ENCODE measurements at regions of chr13 and their contacts with region 1.

Region 1: DNA sequence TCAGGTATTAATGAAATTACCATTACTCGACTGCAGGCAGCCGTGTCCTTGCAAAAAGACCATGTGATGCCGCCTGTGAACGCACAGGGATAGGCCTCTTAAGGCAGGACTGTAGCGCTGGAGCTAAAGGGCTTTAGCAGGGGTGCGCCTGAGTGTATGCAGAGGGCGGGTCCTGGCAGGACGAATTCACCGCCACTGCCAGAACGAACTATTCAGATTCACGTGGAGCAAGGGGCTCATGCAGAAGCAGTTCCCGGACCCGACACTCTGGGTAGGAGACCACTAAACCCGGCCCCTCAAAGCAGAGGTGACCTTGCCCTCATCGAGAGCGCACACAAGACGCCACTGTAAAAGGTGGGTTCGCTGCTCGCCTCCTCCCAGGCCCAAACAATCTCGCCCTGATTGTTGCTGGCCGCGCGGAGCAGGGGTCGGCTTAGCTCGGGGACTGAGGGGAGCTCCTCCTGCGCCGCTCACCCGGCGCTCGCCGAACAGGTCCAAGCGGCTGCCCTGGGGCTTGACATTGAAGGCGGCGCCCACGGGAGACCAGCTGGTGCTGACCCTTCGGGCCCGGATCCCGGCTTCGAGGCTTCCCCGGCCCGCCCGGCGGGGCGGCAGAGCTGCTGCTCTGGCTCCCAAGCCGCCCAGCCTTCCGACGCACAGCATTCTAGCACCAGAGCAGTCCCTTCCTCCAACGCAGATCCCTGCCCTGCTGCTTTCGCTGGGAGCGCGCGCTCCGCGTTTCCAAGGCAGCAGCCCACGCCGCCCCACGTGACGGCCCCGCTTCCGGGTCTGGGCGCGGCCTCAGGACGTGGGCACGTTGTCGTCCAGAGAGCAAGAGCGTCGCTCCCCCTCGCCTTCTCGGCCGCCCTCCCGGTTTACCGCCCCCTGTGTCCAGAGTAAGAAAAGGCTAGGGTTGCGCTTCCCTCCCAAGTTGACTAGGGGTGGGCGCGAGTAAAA is at the start of gene MIPEP:
- DNase-seq: peak; percentile 95
- H3K4me3 ChIP-seq: peak within 1 kb of the TSS; percentile 71 to 95 (median 88)
- H3K27ac ChIP-seq: peak within 1 kb of the TSS; percentile 91 to 93 (median 92)
- H3K4me1 ChIP-seq: peaks cover 0 to 15% (median 13%) of the 10 kb centered on the region in 4 donors
- H3K27me3 ChIP-seq: no peaks in the 10 kb centered on the region
- CTCF ChIP-seq: peak in 3 of 4 experiments; percentile 57 to 70 (median 62)
- EP300 ChIP-seq: no peak
- POLR2A ChIP-seq: peak; percentile 60 to 68
- total RNA-seq, gene MIPEP: 10.7 to 11.4 (median 11.1) TPM

Region 2: DNA sequence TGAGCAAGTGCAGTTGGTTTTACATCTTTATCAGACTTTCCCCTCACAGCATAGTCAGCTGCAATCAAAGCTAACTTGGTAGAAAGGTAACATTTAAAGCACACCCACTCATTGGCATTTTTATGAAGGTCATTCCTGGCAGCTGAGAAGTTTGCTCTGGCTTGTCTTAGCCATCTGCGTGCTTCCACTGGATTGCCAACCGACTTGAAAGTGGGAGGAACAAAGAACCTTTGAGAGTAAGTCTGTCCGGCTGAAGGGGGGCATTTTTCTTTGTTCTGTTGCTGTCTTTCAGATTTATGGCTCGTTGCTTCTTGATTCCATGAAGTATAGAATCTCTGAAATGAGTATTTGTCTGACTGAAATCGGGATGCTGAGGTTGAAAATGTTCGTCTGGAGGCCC is 558.6 kb before region 1 on chr13:
- intact Hi-C with region 1: no loop called
- DNase-seq: no peak
- H3K4me3 ChIP-seq: no peak overlapping the region
- H3K27ac ChIP-seq: no peak overlapping the region
- H3K4me1 ChIP-seq: no peaks in the 10 kb centered on the region
- H3K27me3 ChIP-seq: no peaks in the 10 kb centered on the region
- CTCF ChIP-seq: no peak
- EP300 ChIP-seq: no peak
- POLR2A ChIP-seq: no peak

Region 3: DNA sequence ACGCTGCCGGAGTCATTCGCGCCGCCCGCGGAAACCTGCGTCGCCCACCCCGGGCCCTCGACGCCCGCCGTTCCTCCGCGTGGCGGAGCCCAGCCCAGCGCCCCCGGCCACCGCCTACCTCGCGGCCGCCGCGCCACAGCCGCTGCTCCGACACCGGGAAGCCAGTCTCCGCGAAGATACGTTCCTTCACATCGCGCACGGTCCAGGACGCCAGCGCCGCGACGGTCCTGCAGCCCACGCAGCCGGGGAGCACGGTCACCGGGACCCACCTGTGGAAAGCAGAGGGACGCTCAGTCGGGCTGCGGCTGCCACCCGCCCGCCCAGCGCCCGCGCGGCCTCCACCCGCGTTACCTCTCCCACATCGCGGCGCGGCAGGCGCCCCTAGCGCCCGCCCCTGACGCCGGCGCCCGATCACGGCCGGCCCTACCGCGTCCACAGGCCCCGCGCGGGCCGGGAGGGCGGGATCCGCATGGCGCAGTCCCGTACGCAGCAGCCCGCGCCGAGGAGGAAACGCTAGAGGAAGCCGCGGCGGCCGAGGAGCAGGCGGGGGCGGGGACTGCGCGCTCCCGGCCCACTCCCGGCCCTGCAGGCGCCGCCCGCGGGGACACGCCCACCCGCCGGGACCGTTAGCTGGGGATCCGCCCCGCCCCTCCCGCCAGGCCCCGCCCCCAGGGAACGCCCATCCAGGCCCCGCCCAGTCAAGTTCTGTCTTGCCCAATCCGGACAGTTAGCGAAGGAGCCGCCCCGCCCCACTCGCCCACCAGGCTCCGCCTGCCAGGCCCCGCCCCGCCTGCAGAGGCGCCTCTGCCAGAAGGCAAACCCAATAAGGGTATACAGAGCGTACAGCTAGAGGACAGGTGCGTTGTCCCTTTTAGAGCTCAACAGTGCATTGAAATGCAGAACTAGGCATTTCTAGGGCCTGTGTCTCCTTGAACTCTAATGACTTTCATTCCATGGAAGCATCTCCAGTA is 513.6 kb before region 1 on chr13:
- intact Hi-C with region 1: loop called (anchors 5 kb)
- DNase-seq: peak; percentile 98
- H3K4me3 ChIP-seq: peak overlapping the region; percentile 67 to 91 (median 78)
- H3K27ac ChIP-seq: peak overlapping the region; percentile 86 to 95 (median 90)
- H3K4me1 ChIP-seq: peaks cover 0 to 53% (median 35%) of the 10 kb centered on the region in 4 donors
- H3K27me3 ChIP-seq: no peaks in the 10 kb centered on the region
- CTCF ChIP-seq: peak in 1 of 4 experiments; percentile 19
- EP300 ChIP-seq: no peak
- POLR2A ChIP-seq: peak in 1 of 2 donors; percentile 23

Region 4: DNA sequence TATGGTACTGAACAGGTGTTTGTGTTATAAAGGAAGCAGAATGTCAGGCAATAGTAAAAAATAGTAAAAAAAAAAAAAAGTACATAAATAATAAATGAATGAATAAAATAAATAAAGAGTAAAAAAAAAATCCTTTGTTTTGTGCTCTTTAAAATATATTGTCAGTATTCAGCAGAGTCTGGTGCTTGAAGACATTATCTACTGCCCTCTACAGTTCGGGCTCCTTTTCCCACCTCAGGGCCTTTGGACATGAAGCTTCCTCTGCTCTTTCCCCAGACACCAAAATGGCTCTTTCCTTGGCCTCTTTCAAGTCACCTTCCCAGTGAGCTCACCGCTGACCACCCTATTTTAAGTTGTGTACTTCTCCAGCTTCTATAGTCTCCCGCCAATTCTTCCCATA is 181.3 kb before region 1 on chr13:
- intact Hi-C with region 1: no loop called
- DNase-seq: no peak
- H3K4me3 ChIP-seq: no peak overlapping the region
- H3K27ac ChIP-seq: no peak overlapping the region
- H3K4me1 ChIP-seq: no peaks in the 10 kb centered on the region
- H3K27me3 ChIP-seq: no peaks in the 10 kb centered on the region
- CTCF ChIP-seq: no peak
- EP300 ChIP-seq: no peak
- POLR2A ChIP-seq: no peak

Region 5: GRCh38 chr13:24203811-24204210 is 314.9 kb after region 1 on chr13:
- intact Hi-C with region 1: no loop called
- DNase-seq: no peak
- H3K4me3 ChIP-seq: no peak overlapping the region
- H3K27ac ChIP-seq: peak overlapping the region in 3 of 4 donors; percentile 53 to 79 (median 77)
- H3K4me1 ChIP-seq: peaks cover 0 to 57% (median 50%) of the 10 kb centered on the region in 4 donors
- H3K27me3 ChIP-seq: no peaks in the 10 kb centered on the region
- CTCF ChIP-seq: no peak
- EP300 ChIP-seq: no peak
- POLR2A ChIP-seq: no peak

Region 6: GRCh38 chr13:24323036-24323738 is 434.3 kb after region 1 on chr13:
- intact Hi-C with region 1: loop called (anchors 5 kb)
- DNase-seq: no peak
- H3K4me3 ChIP-seq: no peak overlapping the region
- H3K27ac ChIP-seq: no peak overlapping the region
- H3K4me1 ChIP-seq: no peaks in the 10 kb centered on the region
- H3K27me3 ChIP-seq: peaks cover 0 to 17% (median 0%) of the 10 kb centered on the region in 3 donors
- CTCF ChIP-seq: no peak
- EP300 ChIP-seq: no peak
- POLR2A ChIP-seq: no peak

Region 7: DNA sequence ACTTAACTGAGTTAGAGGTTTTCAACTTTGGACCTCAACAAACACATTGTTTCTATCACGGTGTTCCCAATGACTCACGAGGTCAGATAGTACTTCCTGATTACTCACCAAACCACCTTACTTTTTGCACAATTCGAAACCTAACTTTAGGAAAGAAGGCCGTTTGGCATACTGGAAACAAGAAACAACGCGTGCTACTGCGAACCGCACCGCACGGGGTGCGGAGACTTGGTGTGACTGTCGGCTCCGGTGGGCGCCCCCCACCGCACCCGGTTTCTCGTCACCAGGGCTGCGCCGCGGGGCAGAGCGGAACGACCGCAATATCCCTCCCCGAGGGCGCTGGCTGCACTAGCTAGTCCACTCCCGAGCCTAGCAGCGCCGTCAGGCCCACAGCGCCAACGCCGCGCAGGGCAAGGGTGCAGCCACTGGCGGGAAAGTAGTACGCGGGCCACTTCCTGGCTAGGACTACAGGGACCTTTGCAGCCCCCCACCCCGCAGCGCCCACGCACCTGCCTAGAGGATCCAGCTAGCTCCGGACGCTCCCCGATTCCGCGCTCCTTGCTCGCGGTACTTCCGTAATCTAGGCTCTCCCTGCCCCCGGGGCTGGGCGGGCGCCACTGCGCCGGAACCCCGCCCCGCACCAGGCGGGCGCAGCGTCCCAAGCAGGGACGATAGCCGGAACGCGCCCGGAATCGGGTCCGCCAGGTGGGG is 623.4 kb after region 1 on chr13 and contains the start of gene PARP4:
- intact Hi-C with region 1: loop called (anchors 5 kb)
- DNase-seq: peak; percentile 86
- H3K4me3 ChIP-seq: peak within 1 kb of the TSS; percentile 74 to 85 (median 78)
- H3K27ac ChIP-seq: peak within 1 kb of the TSS; percentile 88 to 94 (median 92)
- H3K4me1 ChIP-seq: peaks cover 0 to 21% (median 12%) of the 10 kb centered on the region in 4 donors
- H3K27me3 ChIP-seq: no peaks in the 10 kb centered on the region
- CTCF ChIP-seq: peak in 1 of 4 experiments; percentile 11
- EP300 ChIP-seq: no peak
- POLR2A ChIP-seq: peak; percentile 32 to 62
- total RNA-seq, gene PARP4: 33.3 to 54.3 (median 39.8) TPM